ENCODE measurements at regions of chr1 and their contacts with region 1.

Region 1: DNA sequence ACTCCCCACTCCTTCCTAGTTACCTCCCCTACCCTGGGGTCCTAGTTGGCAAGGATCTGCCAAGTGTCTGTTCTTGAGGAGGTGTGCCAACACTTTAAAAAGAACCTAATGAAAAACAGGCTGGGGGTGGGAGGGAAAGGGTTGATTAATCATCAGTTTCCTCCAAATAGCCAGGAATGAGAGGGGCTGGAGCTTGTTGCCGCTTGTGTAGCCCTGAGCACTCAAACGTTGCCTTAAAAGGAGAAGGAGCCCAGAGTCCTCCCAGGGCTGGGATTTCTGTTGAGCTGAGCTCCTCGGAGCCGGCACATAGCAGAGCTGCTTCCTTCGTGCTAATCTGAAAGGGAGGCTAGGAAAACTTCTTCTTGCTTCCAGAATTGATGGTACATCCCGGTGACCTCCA is 15.9 kb downstream of the SHISA4 start:
- DNase-seq: peak; percentile 81
- H3K4me3 ChIP-seq: no peak overlapping the region
- H3K27ac ChIP-seq: peak overlapping the region; percentile 30
- H3K4me1 ChIP-seq: peaks cover 13% of the 10 kb centered on the region
- H3K27me3 ChIP-seq: no peaks in the 10 kb centered on the region
- CTCF ChIP-seq: no peak
- POLR2A ChIP-seq: no peak

Region 2: GRCh38 chr1:200890818-200891773 is 1013.5 kb before region 1 on chr1:
- CTCF ChIA-PET with region 1: no interaction called
- POLR2A ChIA-PET with region 1: no interaction called
- dilution Hi-C with region 1: no loop called
- intact Hi-C with region 1: no loop called
- DNase-seq: peak; percentile 27
- H3K4me3 ChIP-seq: peak overlapping the region in 2 of 3 experiments; percentile 30 to 47
- H3K27ac ChIP-seq: no peak overlapping the region
- H3K4me1 ChIP-seq: no peaks in the 10 kb centered on the region
- H3K27me3 ChIP-seq: peaks cover 39 to 46% of the 10 kb centered on the region in 2 experiments
- CTCF ChIP-seq: peak; percentile 50
- POLR2A ChIP-seq: no peak

Region 3: DNA sequence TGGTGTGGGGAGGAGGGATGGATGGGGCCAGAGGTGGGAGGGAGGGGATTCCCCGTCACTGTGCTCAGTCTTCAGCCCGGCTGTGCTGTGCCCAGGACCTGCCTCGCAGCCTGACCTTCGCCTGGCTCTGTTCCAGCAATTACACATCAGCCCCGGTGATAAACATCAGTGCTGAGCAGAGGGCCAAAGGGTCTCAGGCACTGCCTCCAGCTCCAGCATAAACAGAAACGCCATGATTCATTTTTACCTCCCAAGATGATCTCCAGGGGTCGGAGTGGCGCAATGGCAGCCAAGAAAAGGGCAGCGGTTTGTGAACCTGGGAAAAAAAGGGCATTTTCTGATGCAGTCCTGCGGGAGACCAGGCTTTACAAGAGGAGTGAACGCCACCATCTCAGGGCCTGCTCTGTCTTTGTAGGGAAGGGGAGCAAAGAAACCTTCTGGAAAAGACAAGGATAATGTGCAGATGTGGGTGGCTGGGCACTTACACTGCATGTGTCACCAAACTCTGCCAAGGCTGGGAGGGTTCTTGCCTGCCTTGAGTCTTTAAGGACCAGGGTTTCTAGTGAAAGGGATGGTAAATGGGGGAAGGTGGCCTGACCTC is 12.2 kb after region 1 on chr1:
- CTCF ChIA-PET with region 1: interaction called, 6 read pairs
- POLR2A ChIA-PET with region 1: interaction called, 3 read pairs
- dilution Hi-C with region 1: no loop called
- intact Hi-C with region 1: loop called (anchors 1 kb)
- DNase-seq: peak; percentile 97
- H3K4me3 ChIP-seq: no peak overlapping the region
- H3K27ac ChIP-seq: peak overlapping the region; percentile 35
- H3K4me1 ChIP-seq: peaks cover 19% of the 10 kb centered on the region
- H3K27me3 ChIP-seq: no peaks in the 10 kb centered on the region
- CTCF ChIP-seq: no peak
- POLR2A ChIP-seq: peak; percentile 50

Region 4: DNA sequence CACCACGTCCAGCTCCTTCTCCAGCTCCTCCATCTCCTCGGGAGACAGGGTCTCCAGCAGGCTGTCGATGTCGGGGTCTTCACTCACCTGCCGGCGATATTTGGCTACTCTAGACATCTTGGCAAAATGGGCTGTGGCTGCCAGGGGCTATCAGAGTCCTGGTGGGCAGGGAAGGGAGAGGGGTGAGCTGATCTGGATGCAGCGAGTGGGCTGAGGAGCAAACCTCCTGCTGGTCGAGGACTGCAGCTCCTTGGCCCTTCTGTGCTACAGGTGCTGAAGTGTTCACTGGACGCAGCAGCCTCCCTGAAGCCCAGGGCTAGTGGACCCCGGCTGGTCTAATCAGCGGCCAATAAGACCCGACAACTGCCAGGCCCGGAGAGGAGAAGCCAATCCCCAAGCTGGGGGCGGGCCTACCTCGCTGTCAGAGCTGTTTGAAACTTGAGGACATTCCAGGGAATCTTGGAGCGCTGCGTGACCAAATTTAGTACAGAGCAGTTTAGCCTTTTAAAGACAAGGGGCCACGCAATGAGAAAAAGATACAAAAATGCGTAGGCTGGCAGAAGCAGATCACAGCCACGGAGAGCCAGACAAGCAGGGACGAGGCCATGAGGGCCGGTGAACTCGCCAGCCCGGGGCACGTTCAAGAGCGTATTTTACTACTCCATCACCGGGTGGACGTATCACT is 41.8 kb after region 1 on chr1 and contains the start of gene LMOD1:
- CTCF ChIA-PET with region 1: interaction called, 11 read pairs
- POLR2A ChIA-PET with region 1: interaction called, 3 read pairs
- dilution Hi-C with region 1: no loop called
- intact Hi-C with region 1: no loop called
- DNase-seq: peak; percentile 83
- H3K4me3 ChIP-seq: peak within 1 kb of the TSS in 1 of 3 experiments; percentile 25
- H3K27ac ChIP-seq: no peak within 1 kb of the TSS
- H3K4me1 ChIP-seq: peaks cover 9% of the 10 kb centered on the region
- H3K27me3 ChIP-seq: peaks cover 11 to 13% of the 10 kb centered on the region in 2 experiments
- CTCF ChIP-seq: no peak
- POLR2A ChIP-seq: no peak
- total RNA-seq, gene LMOD1: 0.12 and 0.33 TPM in 2 replicates

Region 5: GRCh38 chr1:201955009-201955728 is 50.6 kb after region 1 on chr1 and contains the start of gene TIMM17A:
- CTCF ChIA-PET with region 1: interaction called, 3 read pairs
- POLR2A ChIA-PET with region 1: interaction called, 7 read pairs
- dilution Hi-C with region 1: no loop called
- intact Hi-C with region 1: loop called (anchors 2 kb)
- DNase-seq: peak; percentile 99
- H3K4me3 ChIP-seq: peak within 1 kb of the TSS; percentile 26 to 87 (median 68)
- H3K27ac ChIP-seq: peak within 1 kb of the TSS; percentile 71
- H3K4me1 ChIP-seq: peaks cover 10% of the 10 kb centered on the region
- H3K27me3 ChIP-seq: no peaks in the 10 kb centered on the region
- CTCF ChIP-seq: no peak
- POLR2A ChIP-seq: peak; percentile 97
- total RNA-seq, gene TIMM17A: 93.7 and 105 TPM in 2 replicates

Measured in endothelial cell of umbilical vein (primary cell).